Adrenal gland (tissue), 19 donors: ENCODE measurements at regions of chr10 and their contacts with region 1.

Region 1: DNA sequence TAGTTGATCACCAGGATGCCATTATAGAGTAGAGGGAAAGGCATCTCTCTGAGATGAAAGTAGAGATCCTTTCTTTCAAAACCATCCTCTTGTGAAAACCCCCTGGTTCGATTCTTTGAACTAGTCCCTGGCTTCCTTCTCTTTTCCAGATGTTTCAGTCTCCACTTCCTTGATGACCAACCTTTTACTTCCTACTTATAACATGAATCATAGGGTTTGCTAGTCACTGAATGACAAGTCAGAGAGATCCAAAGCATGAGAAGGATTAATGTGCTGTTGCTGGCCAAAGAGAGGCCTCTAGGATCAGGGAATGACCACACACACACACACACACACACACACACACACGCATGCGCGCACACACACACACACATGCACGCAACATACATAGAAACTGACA is 161.1 kb upstream of the FRMD4A start:
- DNase-seq: no peak
- H3K4me3 ChIP-seq: no peak overlapping the region
- H3K27ac ChIP-seq: no peak overlapping the region
- H3K4me1 ChIP-seq: no peaks in the 10 kb centered on the region
- H3K27me3 ChIP-seq: no peaks in the 10 kb centered on the region
- CTCF ChIP-seq: no peak
- POLR2A ChIP-seq: no peak

Region 2: GRCh38 chr10:14837757-14838581 is 346.2 kb after region 1 on chr10 and contains the starts of genes CDNF, HSPA14 and MSANTD7:
- intact Hi-C with region 1: loop called in 1 of 2 experiments (anchors 10 kb)
- DNase-seq: peak; percentile 99 to 100 (median 99)
- H3K4me3 ChIP-seq: peak within 1 kb of the TSS; percentile 55 to 95 (median 81)
- H3K27ac ChIP-seq: peak within 1 kb of the TSS; percentile 70 to 97 (median 96)
- H3K4me1 ChIP-seq: peaks cover 14 to 20% of the 10 kb centered on the region in 2 donors
- H3K27me3 ChIP-seq: no peaks in the 10 kb centered on the region
- CTCF ChIP-seq: peak in 2 of 6 experiments; percentile 11 to 19
- POLR2A ChIP-seq: peak; percentile 81 to 92
- total RNA-seq, gene CDNF: 0.97 to 6.6 (median 2.9) TPM
- total RNA-seq, gene HSPA14: 5.4 to 20.0 (median 11.3) TPM
- total RNA-seq, gene MSANTD7: 4.8 to 14.8 (median 7.6) TPM